ENCODE measurements at regions of chr10 and their contacts with region 1.

Region 1: GRCh38 chr10:132387764-132388210 is 9.2 kb upstream of the PWWP2B start:
- DNase-seq: peak; percentile 67 to 74
- H3K4me3 ChIP-seq: no peak overlapping the region
- H3K27ac ChIP-seq: no peak overlapping the region
- H3K4me1 ChIP-seq: peaks cover 3 to 8% of the 10 kb centered on the region in 2 donors
- H3K27me3 ChIP-seq: no peaks in the 10 kb centered on the region
- CTCF ChIP-seq: peak; percentile 22 to 73 (median 61)
- POLR2A ChIP-seq: no peak

Region 2: DNA sequence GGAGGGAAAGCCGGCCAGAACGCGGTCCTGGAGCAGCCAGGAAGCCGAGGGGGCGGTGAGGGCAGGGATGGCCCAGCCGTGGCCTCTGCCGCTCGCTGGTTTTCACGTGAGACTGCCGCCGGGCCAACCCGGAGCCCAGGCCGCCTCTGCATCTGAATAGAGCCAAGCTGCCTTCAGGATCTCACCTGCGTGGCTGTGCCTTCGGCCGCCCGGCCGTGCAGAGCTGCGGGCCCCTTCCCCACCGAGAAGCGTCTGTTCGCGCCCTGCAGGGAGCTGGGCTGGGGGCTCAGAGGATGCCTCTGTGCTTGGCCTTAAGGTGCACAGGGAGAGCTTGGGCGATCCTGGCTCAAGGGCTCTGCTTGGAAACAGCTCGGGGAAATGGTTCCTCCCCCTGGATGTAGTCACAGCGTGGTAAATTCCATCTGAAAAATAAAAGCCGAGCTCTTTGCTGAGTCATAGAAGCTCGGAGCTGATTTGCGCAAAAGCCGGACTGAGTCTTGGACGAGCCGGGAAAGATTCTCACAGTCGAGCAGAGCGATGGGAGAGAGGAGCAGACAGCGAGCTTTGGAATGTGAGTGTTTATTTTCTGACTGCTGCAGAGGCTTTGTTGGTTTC is 322.2 kb before region 1 on chr10 and contains the start of gene JAKMIP3:
- intact Hi-C with region 1: no loop called
- DNase-seq: peak; percentile 69 to 76
- H3K4me3 ChIP-seq: peak within 1 kb of the TSS in 2 of 3 donors; percentile 21 to 31
- H3K27ac ChIP-seq: peak within 1 kb of the TSS; percentile 26 to 89 (median 66)
- H3K4me1 ChIP-seq: peaks cover 5 to 9% of the 10 kb centered on the region in 2 donors
- H3K27me3 ChIP-seq: no peaks in the 10 kb centered on the region
- CTCF ChIP-seq: no peak
- POLR2A ChIP-seq: peak in 1 of 2 donors; percentile 56
- total RNA-seq, gene JAKMIP3: 1.1 to 3.0 (median 1.6) TPM

Region 3: DNA sequence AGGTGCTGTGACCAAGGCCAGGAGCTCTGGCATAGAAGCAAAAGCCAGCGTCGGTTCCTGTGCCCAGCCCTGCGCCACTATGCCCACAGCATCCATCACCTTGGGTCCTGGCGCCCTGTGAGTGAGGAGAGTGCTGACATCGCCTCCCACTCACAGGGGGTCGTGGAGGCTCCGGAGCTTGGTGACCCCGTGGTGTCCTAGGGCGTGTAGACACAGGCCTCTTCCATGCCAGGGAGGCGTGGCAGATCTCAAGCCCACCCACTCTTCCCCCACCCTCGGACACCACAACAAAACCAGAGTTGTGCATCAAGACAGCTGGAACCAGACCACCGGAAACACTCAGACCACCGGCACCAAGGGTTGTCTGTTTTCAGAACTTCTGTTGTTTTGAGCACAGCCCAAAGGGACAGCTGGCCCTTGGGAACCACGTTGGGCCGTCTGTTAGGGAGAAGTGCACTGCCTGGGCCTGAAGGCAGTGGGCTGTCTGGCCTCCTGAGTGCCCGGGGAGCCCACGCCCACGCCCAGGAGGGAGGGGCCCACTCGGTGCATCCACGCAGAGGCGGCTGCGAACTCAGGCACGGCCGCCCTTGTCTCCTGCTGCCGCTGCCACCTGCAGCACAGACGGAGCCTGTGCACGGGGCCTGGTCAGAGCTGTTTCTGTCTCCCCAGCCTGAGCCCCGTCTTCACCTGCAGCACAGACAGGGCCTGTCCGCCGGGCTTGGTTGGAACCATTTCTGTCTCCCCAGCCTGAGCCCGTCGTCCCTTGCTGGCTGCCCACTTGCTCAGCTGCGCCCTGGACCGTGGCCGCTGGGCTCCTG is 256.1 kb after region 1 on chr10:
- intact Hi-C with region 1: loop called (anchors 5 kb)
- DNase-seq: no peak
- H3K4me3 ChIP-seq: no peak overlapping the region
- H3K27ac ChIP-seq: no peak overlapping the region
- H3K4me1 ChIP-seq: no peaks in the 10 kb centered on the region
- H3K27me3 ChIP-seq: no peaks in the 10 kb centered on the region
- CTCF ChIP-seq: no peak
- POLR2A ChIP-seq: no peak